T-cell (primary cell): ENCODE measurements at regions of chr12 and their contacts with region 1.

Region 1: GRCh38 chr12:83005534-83006197 is 319.0 kb downstream of the TMTC2 start:
- DNase-seq: no peak
- ATAC-seq: no peak
- H3K4me3 ChIP-seq: no peak overlapping the region
- H3K4me3 Mint-ChIP-seq: no peak overlapping the region
- H3K27ac ChIP-seq: no peak overlapping the region
- H3K27ac Mint-ChIP-seq: no peak overlapping the region
- H3K4me1 ChIP-seq: no peaks in the 10 kb centered on the region
- H3K4me1 Mint-ChIP-seq: no peaks in the 10 kb centered on the region
- H3K27me3 ChIP-seq: no peaks in the 10 kb centered on the region
- H3K27me3 Mint-ChIP-seq: no peaks in the 10 kb centered on the region

Region 2: DNA sequence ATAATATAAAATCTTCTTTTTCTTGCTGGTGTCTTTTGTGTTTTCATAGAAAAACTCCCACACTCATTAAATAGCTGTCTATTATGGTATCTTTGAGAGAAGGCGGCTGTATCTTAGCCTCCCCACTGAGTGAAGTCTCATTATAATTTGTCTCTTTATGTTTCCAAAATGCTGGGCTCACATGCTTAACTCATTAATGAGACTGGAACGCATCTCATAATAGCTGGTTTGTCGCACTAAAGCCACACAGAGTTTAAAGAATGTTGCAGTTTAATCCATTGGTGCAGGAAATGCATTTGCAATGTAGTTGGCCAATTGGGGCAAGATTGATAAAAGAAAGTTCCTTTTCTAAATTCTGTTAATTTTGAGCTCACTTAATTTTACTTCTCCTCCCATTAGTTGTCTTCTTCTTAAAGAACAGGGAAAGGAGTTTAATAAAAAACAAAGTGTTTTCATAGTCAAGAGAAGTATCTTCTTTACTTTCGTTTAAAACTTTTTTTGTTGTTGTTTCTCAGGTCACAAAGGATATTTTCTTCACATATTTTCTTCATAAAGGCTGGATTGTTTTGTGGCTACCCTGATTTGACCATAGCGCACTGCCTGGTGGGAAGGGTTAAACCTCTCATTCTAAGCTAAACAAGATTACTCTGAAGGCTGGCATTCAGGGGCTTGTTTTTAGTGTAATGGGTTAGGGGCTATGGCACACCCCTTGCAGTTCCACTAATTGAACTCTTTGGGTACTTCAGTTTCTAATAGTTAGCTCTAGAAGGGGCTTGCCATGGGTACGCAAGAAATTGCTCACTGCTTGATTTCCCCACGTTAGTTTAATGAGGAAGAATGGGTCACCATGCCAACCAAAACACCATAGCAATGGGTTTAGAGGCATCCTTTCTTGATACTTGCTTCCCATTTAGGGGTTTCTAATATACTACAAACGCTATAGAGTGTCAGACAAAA is 122.0 kb before region 1 on chr12:
- CTCF ChIA-PET with region 1: no interaction called
- POLR2A ChIA-PET with region 1: no interaction called
- DNase-seq: no peak
- ATAC-seq: no peak
- H3K4me3 ChIP-seq: no peak overlapping the region
- H3K4me3 Mint-ChIP-seq: no peak overlapping the region
- H3K27ac ChIP-seq: no peak overlapping the region
- H3K27ac Mint-ChIP-seq: no peak overlapping the region
- H3K4me1 ChIP-seq: no peaks in the 10 kb centered on the region
- H3K4me1 Mint-ChIP-seq: no peaks in the 10 kb centered on the region
- H3K27me3 ChIP-seq: no peaks in the 10 kb centered on the region
- H3K27me3 Mint-ChIP-seq: no peaks in the 10 kb centered on the region

Region 3: DNA sequence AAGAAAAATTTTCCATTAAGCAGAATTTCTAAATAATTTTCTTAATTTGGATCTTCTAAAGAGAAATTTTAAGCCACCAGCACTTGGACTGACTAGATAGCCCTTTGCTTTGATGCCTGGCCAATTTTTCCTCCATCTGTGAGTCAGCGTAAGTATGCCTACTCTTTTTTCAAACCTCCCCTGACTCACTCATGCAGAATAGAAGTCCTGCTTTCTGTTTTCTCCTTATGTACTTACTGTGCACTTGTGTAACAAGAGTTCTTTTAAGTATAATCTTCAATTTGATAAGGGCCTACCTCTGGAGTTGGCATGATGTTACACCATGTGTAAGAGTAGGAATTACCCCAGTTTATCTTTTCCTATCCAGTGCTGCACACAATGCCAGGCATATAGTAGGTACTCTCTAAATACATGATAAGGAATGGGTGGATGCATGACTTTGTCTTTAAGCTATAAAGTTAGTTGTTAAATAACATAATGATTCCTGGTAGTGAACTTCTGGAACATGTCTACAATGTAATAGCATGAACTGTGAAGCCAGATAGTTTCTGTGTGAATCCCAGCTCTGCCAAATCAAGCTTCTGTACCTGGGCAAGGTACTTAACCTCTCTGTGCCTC is 10.7 kb after region 1 on chr12:
- CTCF ChIA-PET with region 1: no interaction called
- POLR2A ChIA-PET with region 1: interaction called in 1 of 2 experiments, 14 read pairs
- DNase-seq: no peak
- ATAC-seq: no peak
- H3K4me3 ChIP-seq: no peak overlapping the region
- H3K4me3 Mint-ChIP-seq: no peak overlapping the region
- H3K27ac ChIP-seq: no peak overlapping the region
- H3K27ac Mint-ChIP-seq: no peak overlapping the region
- H3K4me1 ChIP-seq: no peaks in the 10 kb centered on the region
- H3K4me1 Mint-ChIP-seq: peaks cover 0 to 2% (median 0%) of the 10 kb centered on the region in 3 donors
- H3K27me3 ChIP-seq: no peaks in the 10 kb centered on the region
- H3K27me3 Mint-ChIP-seq: no peaks in the 10 kb centered on the region